Activated CD4-positive, alpha-beta T cell treated with anti-CD3 and anti-CD28 coated beads, Interleukin-2, amount 10 ng/mL, durations not matched to agents 24 days and 14 days (primary cell): ENCODE measurements at regions of chr14 and their contacts with region 1.

Region 1: GRCh38 chr14:88005978-88006851 is 1.3 kb downstream of the GPR65 start:
- DNase-seq: peak; percentile 91
- H3K4me3 Mint-ChIP-seq: peak overlapping the region; percentile 87
- H3K27ac Mint-ChIP-seq: peak overlapping the region; percentile 90
- H3K4me1 Mint-ChIP-seq: peaks cover 61% of the 10 kb centered on the region
- H3K27me3 Mint-ChIP-seq: no peaks in the 10 kb centered on the region

Region 2: GRCh38 chr14:87992718-87993628 is 13.2 kb before region 1 on chr14 and contains the start of gene GALC:
- intact Hi-C with region 1: loop called (anchors 1 kb)
- DNase-seq: peak; percentile 98
- H3K4me3 Mint-ChIP-seq: peak within 1 kb of the TSS; percentile 88
- H3K27ac Mint-ChIP-seq: peak within 1 kb of the TSS; percentile 94
- H3K4me1 Mint-ChIP-seq: peaks cover 55% of the 10 kb centered on the region
- H3K27me3 Mint-ChIP-seq: no peaks in the 10 kb centered on the region
- total RNA-seq, gene GALC: 7.3 and 9.3 TPM in 2 replicates

Region 3: GRCh38 chr14:88044851-88045339 is 38.7 kb after region 1 on chr14:
- intact Hi-C with region 1: loop called (anchors 5 kb)
- DNase-seq: no peak
- H3K4me3 Mint-ChIP-seq: no peak overlapping the region
- H3K27ac Mint-ChIP-seq: no peak overlapping the region
- H3K4me1 Mint-ChIP-seq: peaks cover 3% of the 10 kb centered on the region
- H3K27me3 Mint-ChIP-seq: no peaks in the 10 kb centered on the region

Region 4: DNA sequence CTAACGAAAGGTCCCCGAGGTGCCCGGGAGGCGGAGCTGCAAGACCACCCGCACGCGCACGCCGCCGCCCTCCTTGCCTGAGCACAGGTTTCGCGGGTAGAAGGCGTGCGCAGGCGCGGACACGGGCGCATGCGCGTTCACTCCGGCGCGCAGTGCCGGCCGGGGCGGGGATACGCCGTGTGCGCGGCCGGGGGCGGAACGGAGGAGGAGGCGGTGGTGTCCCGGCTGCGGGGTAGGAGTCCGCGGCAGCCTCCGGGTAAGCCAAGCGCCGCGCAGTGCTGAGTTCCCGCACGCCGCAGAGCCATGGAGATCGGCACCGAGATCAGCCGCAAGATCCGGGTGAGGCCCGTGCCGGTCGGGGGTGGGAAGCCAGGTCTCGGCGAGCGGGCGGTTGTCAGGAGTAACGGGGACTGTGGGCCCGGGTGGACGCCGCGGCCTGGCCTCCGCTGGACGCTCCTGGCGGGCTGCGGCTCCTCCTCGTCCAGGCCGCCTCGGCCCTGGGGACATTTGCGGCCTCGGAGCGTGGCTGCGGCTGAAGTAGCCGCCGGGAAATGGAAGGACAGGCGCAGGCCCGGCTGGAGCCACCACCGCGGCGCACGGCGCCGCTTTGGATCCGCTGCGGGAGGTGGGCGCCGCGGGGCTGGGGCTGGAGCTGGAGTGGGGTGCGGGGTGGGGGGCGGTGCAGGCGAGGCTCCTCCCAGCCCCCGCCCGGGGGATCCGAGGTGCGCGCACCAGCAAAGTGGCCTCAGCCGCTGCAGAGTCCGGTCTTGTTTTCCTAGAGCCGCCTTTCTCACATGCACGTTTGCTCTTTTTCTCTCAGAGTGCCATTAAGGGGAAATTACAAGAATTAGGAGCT is 556.8 kb after region 1 on chr14 and contains the start of gene ZC3H14:
- intact Hi-C with region 1: loop called (anchors 10 kb)
- DNase-seq: peak; percentile 97
- H3K4me3 Mint-ChIP-seq: peak within 1 kb of the TSS; percentile 94
- H3K27ac Mint-ChIP-seq: peak within 1 kb of the TSS; percentile 95
- H3K4me1 Mint-ChIP-seq: peaks cover 23% of the 10 kb centered on the region
- H3K27me3 Mint-ChIP-seq: peaks cover 27% of the 10 kb centered on the region
- total RNA-seq, gene ZC3H14: 59.2 and 64.7 TPM in 2 replicates